ENCODE measurements at regions of chr3 and their contacts with region 1.

Region 1: DNA sequence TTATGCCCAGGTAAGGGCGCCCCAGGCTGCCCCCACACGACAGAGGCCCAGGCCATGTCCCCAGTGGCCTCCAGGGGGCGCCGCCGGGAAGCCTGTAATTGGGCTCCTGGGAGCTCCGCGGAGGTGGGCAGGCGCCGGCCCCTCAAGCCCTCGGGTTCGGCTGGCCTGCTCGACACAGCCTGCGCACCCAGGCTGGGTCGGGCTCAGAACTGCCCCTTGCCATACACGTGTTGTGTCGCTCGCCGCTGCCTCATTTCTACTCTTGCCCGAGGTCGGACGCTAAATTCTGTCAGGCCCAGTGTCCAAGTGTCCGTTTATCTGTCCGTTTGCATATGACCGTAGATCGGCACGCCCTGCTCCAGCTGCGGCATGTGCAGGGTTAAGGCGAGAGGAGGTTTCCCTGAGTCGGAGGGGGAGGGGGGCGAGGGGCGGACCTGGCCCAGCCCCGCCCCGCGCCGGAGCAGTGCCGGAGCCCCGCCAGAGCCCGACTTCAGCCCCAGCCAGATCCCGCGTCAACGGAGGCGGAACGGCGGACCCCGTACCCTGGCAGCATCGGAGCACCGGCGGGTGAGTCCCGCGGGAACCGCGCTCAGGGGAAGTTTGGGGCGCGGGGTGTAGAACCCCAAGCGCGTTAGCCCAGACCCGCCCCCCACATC is at the start of gene KLHDC8B:
- DNase-seq: peak; percentile 93
- ATAC-seq: peak; percentile 90
- H3K4me3 Mint-ChIP-seq: peak within 1 kb of the TSS; percentile 76
- H3K27ac Mint-ChIP-seq: peak within 1 kb of the TSS; percentile 71
- H3K4me1 Mint-ChIP-seq: peaks cover 16% of the 10 kb centered on the region
- H3K27me3 Mint-ChIP-seq: no peaks in the 10 kb centered on the region
- CTCF ChIP-seq: peak; percentile 98
- total RNA-seq, gene KLHDC8B: 1.3 to 2.2 TPM

Region 2: DNA sequence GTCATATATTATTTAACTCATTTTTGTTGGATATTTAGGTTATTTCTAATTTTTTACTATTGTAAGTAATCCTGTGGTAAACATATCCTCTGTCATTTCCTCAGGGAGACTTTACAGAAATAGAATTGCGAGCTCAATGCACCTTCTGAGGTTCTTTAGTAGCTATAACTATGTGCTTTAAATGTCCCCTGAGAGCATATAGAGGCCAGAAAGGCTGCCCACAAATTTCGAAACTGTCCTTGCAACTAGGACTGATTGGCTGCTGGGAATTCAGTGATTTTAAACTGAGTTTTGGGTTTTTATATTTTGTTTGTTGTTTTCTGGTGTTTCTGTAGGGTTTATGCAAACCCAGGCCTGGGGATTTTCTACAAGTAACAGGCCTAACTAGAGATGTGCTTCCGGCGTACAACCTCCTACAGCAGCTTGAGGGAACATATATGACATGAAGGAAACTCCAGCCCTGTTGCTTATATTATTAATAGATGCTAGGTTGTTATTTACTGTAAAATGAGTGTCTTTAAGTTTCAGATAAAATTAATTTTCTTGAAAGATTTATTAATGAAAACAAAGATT is 210.3 kb before region 1 on chr3:
- CTCF ChIA-PET with region 1: no interaction called
- POLR2A ChIA-PET with region 1: no interaction called
- intact Hi-C with region 1: no loop called
- DNase-seq: no peak
- ATAC-seq: no peak
- H3K4me3 Mint-ChIP-seq: no peak overlapping the region
- H3K27ac Mint-ChIP-seq: no peak overlapping the region
- H3K4me1 Mint-ChIP-seq: peaks cover under 1% of the 10 kb centered on the region
- H3K27me3 Mint-ChIP-seq: no peaks in the 10 kb centered on the region
- CTCF ChIP-seq: no peak

Region 3: DNA sequence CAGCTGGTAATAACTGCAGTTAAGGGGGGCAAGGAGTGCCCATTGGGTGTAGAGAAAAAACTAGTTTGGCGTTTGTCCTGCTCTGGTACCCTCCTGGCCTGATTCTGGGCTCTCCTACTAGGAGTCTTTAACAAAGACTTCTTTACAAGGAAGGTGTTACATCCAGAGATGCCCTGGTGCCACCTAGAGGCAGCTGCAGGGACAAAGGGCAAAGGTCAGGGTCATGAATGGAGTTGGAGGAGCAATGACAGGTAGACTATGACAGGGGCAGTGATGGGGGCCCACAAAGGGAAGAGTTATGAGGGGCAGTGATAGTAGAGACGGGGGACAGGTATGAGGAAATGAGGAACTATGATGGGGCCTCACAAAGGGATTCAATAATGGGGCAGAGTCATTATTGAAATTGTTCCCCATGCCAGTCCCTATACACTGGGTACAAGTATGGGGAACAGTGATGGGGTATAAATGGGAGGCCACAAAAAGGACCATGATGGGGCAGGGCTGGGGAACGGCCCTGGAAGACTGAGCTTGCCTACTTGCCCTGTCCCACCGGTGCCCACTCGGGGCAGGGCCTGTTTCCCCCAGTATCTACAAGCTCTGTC is 13.0 kb before region 1 on chr3:
- CTCF ChIA-PET with region 1: interaction called, 13 read pairs
- POLR2A ChIA-PET with region 1: no interaction called
- intact Hi-C with region 1: no loop called
- DNase-seq: peak; percentile 84
- ATAC-seq: peak; percentile 90
- H3K4me3 Mint-ChIP-seq: no peak overlapping the region
- H3K27ac Mint-ChIP-seq: peak overlapping the region; percentile 14
- H3K4me1 Mint-ChIP-seq: peaks cover 19% of the 10 kb centered on the region
- H3K27me3 Mint-ChIP-seq: no peaks in the 10 kb centered on the region
- CTCF ChIP-seq: peak; percentile 58

Region 4: GRCh38 chr3:49181351-49181750 is 10.1 kb after region 1 on chr3:
- CTCF ChIA-PET with region 1: interaction called, 15 read pairs
- POLR2A ChIA-PET with region 1: no interaction called
- intact Hi-C with region 1: no loop called
- DNase-seq: no peak
- ATAC-seq: no peak
- H3K4me3 Mint-ChIP-seq: peak overlapping the region; percentile 44
- H3K27ac Mint-ChIP-seq: no peak overlapping the region
- H3K4me1 Mint-ChIP-seq: no peaks in the 10 kb centered on the region
- H3K27me3 Mint-ChIP-seq: peaks cover 7% of the 10 kb centered on the region
- CTCF ChIP-seq: no peak

Region 5: GRCh38 chr3:49191741-49192140 is 20.5 kb after region 1 on chr3:
- CTCF ChIA-PET with region 1: interaction called, 12 read pairs
- POLR2A ChIA-PET with region 1: no interaction called
- intact Hi-C with region 1: no loop called
- DNase-seq: no peak
- ATAC-seq: no peak
- H3K4me3 Mint-ChIP-seq: no peak overlapping the region
- H3K27ac Mint-ChIP-seq: no peak overlapping the region
- H3K4me1 Mint-ChIP-seq: no peaks in the 10 kb centered on the region
- H3K27me3 Mint-ChIP-seq: peaks cover 1% of the 10 kb centered on the region
- CTCF ChIP-seq: no peak

Region 6: DNA sequence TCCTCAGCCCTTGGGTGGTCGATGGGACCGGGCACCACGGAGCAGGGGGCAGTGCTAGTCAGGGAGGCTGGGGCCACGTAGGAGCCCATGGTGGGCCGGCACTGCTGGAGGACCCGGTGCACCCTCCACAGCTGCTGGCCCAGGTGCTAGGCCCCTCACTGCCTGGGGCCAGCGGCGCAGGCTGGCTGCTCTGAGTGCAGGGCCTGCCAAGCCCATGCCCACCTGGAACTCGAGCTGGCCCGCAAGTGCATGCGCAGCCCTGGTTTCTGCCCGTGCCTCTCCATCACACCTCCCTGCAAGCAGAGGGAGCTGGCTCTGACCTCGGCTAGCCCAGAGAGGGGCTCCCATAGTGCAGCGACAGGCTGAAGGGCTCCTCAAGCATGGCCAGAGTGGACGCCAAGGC is 42.3 kb after region 1 on chr3:
- CTCF ChIA-PET with region 1: no interaction called
- POLR2A ChIA-PET with region 1: no interaction called
- intact Hi-C with region 1: no loop called
- DNase-seq: no peak
- ATAC-seq: no peak
- H3K4me3 Mint-ChIP-seq: no peak overlapping the region
- H3K27ac Mint-ChIP-seq: no peak overlapping the region
- H3K4me1 Mint-ChIP-seq: no peaks in the 10 kb centered on the region
- H3K27me3 Mint-ChIP-seq: no peaks in the 10 kb centered on the region
- CTCF ChIP-seq: no peak

Region 7: GRCh38 chr3:49277383-49277775 is 106.1 kb after region 1 on chr3:
- CTCF ChIA-PET with region 1: interaction called, 12 read pairs
- POLR2A ChIA-PET with region 1: interaction called, 3 read pairs
- intact Hi-C with region 1: no loop called
- DNase-seq: no peak
- ATAC-seq: no peak
- H3K4me3 Mint-ChIP-seq: peak overlapping the region; percentile 78
- H3K27ac Mint-ChIP-seq: peak overlapping the region; percentile 89
- H3K4me1 Mint-ChIP-seq: peaks cover 30% of the 10 kb centered on the region
- H3K27me3 Mint-ChIP-seq: no peaks in the 10 kb centered on the region
- CTCF ChIP-seq: no peak

Region 8: GRCh38 chr3:49411968-49412631 is 240.9 kb after region 1 on chr3 and contains the starts of genes RHOA and TCTA:
- CTCF ChIA-PET with region 1: no interaction called
- POLR2A ChIA-PET with region 1: no interaction called
- intact Hi-C with region 1: no loop called
- DNase-seq: peak; percentile 99
- ATAC-seq: peak; percentile 87
- H3K4me3 Mint-ChIP-seq: peak within 1 kb of the TSS; percentile 89
- H3K27ac Mint-ChIP-seq: peak within 1 kb of the TSS; percentile 94
- H3K4me1 Mint-ChIP-seq: peaks cover 64% of the 10 kb centered on the region
- H3K27me3 Mint-ChIP-seq: no peaks in the 10 kb centered on the region
- CTCF ChIP-seq: no peak
- total RNA-seq, gene RHOA: 432 to 437 TPM
- total RNA-seq, gene TCTA: 10.4 to 12.4 TPM

Region 9: DNA sequence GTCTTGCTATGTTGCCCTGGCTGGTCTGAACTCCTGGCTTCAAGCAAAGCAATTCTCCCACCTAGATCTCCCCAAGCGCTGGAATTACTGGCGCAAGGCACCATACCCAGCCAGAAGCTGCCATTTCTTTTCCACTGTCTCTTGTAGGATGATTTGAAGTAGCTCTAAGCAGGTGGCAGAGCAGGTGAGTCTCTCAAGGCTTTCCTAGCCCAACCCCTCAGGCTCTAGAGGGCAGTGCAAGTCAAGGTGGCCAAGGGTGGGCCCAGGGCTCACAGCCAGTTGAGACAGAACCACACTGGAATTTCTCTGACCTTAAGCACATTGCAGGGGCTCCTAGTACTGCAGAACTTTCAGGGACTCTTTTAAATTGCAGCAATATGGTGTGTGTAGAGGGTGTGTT is 283.2 kb after region 1 on chr3:
- CTCF ChIA-PET with region 1: interaction called, 17 read pairs
- POLR2A ChIA-PET with region 1: no interaction called
- intact Hi-C with region 1: no loop called
- DNase-seq: peak; percentile 36
- ATAC-seq: peak; percentile 67
- H3K4me3 Mint-ChIP-seq: no peak overlapping the region
- H3K27ac Mint-ChIP-seq: no peak overlapping the region
- H3K4me1 Mint-ChIP-seq: no peaks in the 10 kb centered on the region
- H3K27me3 Mint-ChIP-seq: no peaks in the 10 kb centered on the region
- CTCF ChIP-seq: peak; percentile 33

Measured in activated CD8-positive, alpha-beta T cell treated with anti-CD3 and anti-CD28 coated beads for 36 hours (primary cell).